Left cardiac atrium (tissue), 4 donors: ENCODE measurements at regions of chr2 and their contacts with region 1.

Region 1: DNA sequence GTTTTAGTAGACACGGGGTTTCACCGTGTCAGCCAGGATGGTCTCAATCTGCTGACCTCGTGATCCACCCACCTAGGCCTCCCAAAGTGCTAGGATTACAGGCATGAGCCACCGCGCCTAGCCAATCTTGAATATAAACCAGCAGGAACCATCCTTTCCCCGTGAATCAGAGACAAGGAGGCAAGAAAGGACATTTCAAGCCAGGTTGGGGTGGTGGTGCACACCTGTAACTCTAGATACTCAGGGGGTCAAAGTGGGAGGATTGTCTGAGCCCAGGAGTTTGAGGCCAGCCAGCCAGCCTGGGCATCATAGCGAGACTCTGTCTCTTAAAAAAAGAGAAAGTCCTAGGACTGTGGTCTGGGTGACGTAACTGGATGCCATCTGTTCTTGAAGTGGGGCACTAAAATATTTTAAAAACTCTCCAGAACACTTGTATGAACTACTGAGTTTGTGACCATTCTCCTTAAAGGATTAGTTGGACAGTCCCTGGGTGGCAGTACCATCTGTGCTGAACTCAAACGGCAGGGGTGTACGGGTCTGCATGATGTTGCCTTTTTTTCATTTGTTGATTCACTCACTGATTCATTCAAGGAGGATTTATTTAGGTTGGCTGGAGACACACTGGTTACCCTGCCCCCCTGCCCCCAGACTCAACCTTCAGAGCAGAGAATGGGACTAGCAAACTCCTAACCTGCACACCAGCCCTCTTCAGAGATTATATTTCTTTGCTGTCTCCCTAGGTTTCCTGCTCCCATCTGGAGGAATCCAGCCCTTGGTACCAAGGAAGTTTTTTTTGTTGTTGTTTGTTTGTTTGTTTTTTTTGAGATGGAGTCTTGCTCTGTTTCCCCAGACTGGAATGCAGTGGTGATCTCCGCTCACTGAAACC is 2.9 kb upstream of the TLX2 start:
- DNase-seq: no peak
- ATAC-seq: no peak

Region 2: DNA sequence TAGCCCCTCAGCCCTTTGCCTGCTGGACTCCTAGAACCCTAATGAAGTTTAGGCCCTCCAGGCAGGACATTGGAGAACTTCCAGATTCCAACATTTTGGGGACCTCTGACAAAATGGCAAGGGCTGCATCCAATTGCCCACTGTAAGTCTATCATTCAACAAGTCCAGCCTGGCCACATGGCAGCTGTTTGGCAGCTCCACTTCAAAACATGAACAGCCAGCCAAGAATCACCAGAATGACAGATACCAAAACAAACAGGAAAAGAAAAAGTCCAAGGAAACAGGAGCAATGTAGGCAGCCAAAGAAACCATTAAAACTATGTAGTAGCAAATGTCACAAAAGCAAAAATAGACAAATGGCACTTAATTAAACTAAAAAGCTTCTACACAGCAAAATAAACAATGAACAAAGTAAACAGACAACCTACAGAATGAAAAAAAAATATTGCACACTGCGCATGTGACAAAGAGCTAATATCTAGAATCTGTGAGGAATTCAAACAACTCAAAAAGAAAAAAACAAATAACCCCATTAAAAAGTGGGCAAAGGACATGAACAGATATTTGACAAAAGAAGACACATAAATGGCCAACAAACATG is 193.5 kb before region 1 on chr2:
- intact Hi-C with region 1: no loop called
- DNase-seq: no peak
- ATAC-seq: no peak

Region 3: DNA sequence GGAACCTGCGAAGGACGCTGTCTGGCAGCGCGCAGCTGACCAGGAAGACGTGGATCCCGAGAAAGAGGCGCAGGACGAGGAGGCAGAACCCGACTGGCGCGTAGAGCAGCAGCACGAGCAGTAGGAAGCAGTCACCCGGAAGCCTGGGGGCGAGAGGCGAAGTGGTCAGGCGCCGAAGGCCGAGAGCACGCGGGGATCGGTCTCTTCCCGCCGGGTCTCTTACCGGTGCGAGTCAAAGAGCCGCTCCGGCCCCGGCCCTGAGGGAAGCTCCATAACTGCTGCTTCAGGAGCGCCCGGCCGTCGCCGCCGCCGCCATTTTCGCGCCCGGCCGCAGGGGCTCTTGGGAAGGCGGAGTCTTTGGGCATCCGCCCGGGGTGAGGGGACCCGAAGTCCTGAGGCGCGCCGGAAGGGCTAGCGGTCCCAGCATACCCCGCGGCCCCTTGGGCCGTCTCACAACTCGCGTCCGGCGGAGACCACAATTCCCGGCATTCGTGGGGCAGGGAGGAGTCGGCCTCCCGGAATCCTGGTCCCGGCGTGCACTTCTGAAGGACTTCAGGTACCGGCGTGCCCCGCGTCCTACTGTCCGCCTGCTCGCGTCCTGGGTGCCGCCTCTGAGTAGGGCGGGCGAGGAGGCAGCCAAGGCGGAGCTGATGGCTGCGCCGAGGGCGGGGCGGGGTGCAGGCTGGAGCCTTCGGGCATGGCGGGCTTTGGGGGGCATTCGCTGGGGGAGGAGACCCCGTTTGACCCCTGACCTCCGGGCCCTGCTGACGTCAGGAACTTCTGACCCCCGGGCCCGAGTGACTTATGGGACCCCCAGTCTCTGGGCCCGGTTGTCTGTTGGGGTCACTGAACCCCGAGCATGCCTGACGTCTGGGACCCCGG is 18.3 kb after region 1 on chr2 and contains the starts of genes AUP1 and HTRA2:
- intact Hi-C with region 1: loop called in 1 of 2 experiments (anchors 2 kb)
- DNase-seq: peak; percentile 99
- ATAC-seq: peak; percentile 95 to 97
- total RNA-seq, gene AUP1: 62.2 to 78.3 TPM
- total RNA-seq, gene HTRA2: 28.7 to 29.3 TPM